ENCODE measurements at regions of chr2 and their contacts with region 1.

Region 1: DNA sequence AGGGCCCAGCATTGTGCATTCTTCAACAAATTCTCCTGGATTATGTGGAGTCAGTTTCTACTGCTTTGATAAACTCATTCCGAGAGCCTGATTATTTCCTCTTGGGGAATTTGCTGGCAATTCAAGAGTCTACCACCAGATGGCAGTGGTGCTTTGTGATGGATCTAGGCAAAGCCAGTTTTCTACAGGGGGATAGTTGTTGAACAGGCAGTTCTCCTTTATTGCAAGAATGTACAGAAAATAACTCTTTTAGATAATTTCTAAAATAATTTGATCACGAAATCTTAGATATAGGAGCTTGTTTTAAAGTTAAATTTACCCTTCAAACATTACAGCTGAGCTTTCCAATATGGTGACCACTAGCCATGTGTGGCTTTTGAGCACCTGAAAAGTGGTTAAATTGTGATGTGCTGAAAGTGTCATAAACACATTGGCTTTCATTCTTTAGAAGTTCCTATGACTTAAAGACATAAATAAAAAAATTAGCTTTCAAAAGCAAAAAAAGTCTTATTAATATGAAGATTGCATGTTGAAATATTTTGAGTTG is 66.7 kb upstream of the HAAO start:
- DNase-seq: peak; percentile 86
- H3K4me3 ChIP-seq: no peak overlapping the region
- H3K27ac ChIP-seq: no peak overlapping the region
- H3K4me1 ChIP-seq: peaks cover 0 to 22% of the 10 kb centered on the region in 2 experiments; a peak in 1 of 4 replicates
- H3K27me3 ChIP-seq: no peaks in the 10 kb centered on the region
- CTCF ChIP-seq: peak; percentile 98
- EP300 ChIP-seq: no peak
- RAD21 ChIP-seq: peak; percentile 98

Region 2: GRCh38 chr2:42871370-42871769 is 12.3 kb after region 1 on chr2:
- CTCF ChIA-PET with region 1: interaction called, 11 read pairs
- POLR2A ChIA-PET with region 1: no interaction called
- DNase-seq: no peak
- H3K4me3 ChIP-seq: no peak overlapping the region
- H3K27ac ChIP-seq: no peak overlapping the region
- H3K4me1 ChIP-seq: peaks cover 0 to 8% of the 10 kb centered on the region in 2 experiments; a peak in 1 of 4 replicates
- H3K27me3 ChIP-seq: no peaks in the 10 kb centered on the region
- CTCF ChIP-seq: no peak
- EP300 ChIP-seq: no peak
- RAD21 ChIP-seq: no peak

Region 3: GRCh38 chr2:42878581-42878980 is 19.5 kb after region 1 on chr2:
- CTCF ChIA-PET with region 1: interaction called, 26 read pairs
- POLR2A ChIA-PET with region 1: no interaction called
- DNase-seq: no peak
- H3K4me3 ChIP-seq: no peak overlapping the region
- H3K27ac ChIP-seq: no peak overlapping the region
- H3K4me1 ChIP-seq: peaks cover 0 to 19% of the 10 kb centered on the region in 2 experiments; a peak in 2 of 4 replicates
- H3K27me3 ChIP-seq: no peaks in the 10 kb centered on the region
- CTCF ChIP-seq: no peak
- EP300 ChIP-seq: no peak
- RAD21 ChIP-seq: no peak

Region 4: GRCh38 chr2:42906557-42907411 is 47.7 kb after region 1 on chr2:
- CTCF ChIA-PET with region 1: interaction called, 20 read pairs
- POLR2A ChIA-PET with region 1: no interaction called
- DNase-seq: peak; percentile 85
- H3K4me3 ChIP-seq: no peak overlapping the region
- H3K27ac ChIP-seq: peak overlapping the region in 1 of 2 experiments; percentile 90; a peak in 2 of 4 replicates
- H3K4me1 ChIP-seq: peaks cover 10 to 40% of the 10 kb centered on the region in 2 experiments
- H3K27me3 ChIP-seq: no peaks in the 10 kb centered on the region
- CTCF ChIP-seq: no peak
- EP300 ChIP-seq: peak in 1 of 2 experiments; percentile 82; a peak in 1 of 4 replicates
- RAD21 ChIP-seq: no peak

Measured in SK-N-SH (cell line).